ENCODE measurements at regions of chr16 and their contacts with region 1.

Region 1: DNA sequence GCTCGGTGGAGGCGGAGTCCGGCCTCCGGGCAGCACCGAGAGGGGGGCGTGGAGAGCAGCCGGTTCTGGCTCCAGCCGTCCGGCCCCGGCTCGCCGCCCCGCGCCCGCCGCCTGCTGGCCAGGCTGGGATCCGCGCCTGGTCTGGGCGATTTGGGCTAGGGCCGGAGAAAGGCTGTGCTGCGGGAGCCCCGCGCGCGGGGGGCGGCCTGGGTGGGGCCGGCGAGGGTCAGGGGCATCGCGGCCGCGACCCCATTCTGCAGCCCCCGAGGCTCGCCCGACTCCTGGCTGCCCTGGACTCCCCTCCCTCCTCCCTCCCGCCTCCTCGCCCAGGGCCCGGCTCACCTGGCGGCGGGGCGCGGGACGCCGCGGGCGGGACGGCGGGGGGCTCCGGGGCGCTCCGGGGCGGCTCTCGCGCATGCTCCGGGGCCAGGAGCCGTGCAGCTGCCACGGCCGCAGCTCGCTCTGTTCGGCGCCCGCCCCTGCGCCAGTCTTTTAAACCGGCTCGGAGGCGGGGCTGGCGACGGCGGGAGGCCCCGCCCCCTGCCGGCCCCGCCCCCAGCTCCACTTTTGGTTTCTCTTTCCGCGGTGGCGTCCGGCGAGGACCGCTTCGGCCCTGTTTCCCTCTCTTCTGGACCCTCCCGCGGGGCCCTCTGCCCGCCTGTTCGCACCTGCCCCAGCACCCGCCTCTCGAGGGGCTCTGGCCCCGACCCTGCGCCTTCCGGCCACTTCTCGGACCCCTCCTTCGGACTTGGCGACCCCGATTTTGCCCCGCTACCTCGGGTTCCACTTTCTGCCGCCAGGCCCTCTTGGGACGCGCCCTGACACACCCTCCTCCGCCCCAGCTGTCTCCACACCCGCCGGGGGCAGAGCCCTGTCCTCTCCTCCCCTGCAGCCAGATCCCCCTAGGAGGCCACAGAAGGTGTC is at the start of gene SOCS1:
- DNase-seq: peak; percentile 91
- ATAC-seq: peak; percentile 71
- H3K4me3 Mint-ChIP-seq: peak within 1 kb of the TSS; percentile 97
- H3K27ac Mint-ChIP-seq: peak within 1 kb of the TSS; percentile 96
- H3K4me1 Mint-ChIP-seq: peaks cover 54% of the 10 kb centered on the region
- H3K27me3 Mint-ChIP-seq: no peaks in the 10 kb centered on the region
- total RNA-seq, gene SOCS1: 170 to 174 TPM

Region 2: DNA sequence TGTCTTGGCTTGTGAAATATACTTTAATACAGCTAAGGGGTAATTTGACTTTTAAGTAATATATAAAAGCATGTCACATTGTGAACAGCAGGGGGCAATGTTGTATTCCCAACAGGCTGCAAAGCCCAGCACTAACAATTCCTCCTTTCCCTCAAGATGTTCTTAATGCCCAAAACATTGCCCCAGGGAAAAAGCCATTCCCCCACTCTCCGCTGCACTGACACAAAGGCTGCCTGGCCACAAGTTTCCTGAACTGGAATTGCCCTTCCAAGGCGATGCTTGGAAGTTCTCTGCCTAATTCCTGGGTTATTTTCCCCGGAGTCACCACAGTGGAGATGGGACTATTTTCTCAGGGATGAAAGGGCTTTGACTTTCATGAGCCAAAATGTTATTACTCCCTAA is 284.4 kb before region 1 on chr16:
- CTCF ChIA-PET with region 1: interaction called, 210 read pairs
- POLR2A ChIA-PET with region 1: interaction called, 79 read pairs
- DNase-seq: peak; percentile 65
- ATAC-seq: no peak
- H3K4me3 Mint-ChIP-seq: no peak overlapping the region
- H3K27ac Mint-ChIP-seq: no peak overlapping the region
- H3K4me1 Mint-ChIP-seq: peaks cover 80% of the 10 kb centered on the region
- H3K27me3 Mint-ChIP-seq: no peaks in the 10 kb centered on the region

Region 3: GRCh38 chr16:11051879-11052808 is 203.9 kb before region 1 on chr16:
- CTCF ChIA-PET with region 1: interaction called, 17 read pairs
- POLR2A ChIA-PET with region 1: interaction called, 54 read pairs
- DNase-seq: peak; percentile 92
- ATAC-seq: peak; percentile 83
- H3K4me3 Mint-ChIP-seq: peak overlapping the region; percentile 17
- H3K27ac Mint-ChIP-seq: peak overlapping the region; percentile 97
- H3K4me1 Mint-ChIP-seq: peaks cover 98% of the 10 kb centered on the region
- H3K27me3 Mint-ChIP-seq: no peaks in the 10 kb centered on the region

Region 4: GRCh38 chr16:11128265-11129141 is 127.5 kb before region 1 on chr16:
- CTCF ChIA-PET with region 1: interaction called, 10 read pairs
- POLR2A ChIA-PET with region 1: interaction called, 5 read pairs
- DNase-seq: peak; percentile 63
- ATAC-seq: peak; percentile 76
- H3K4me3 Mint-ChIP-seq: peak overlapping the region; percentile 28
- H3K27ac Mint-ChIP-seq: peak overlapping the region; percentile 93
- H3K4me1 Mint-ChIP-seq: peaks cover 81% of the 10 kb centered on the region
- H3K27me3 Mint-ChIP-seq: no peaks in the 10 kb centered on the region

Region 5: DNA sequence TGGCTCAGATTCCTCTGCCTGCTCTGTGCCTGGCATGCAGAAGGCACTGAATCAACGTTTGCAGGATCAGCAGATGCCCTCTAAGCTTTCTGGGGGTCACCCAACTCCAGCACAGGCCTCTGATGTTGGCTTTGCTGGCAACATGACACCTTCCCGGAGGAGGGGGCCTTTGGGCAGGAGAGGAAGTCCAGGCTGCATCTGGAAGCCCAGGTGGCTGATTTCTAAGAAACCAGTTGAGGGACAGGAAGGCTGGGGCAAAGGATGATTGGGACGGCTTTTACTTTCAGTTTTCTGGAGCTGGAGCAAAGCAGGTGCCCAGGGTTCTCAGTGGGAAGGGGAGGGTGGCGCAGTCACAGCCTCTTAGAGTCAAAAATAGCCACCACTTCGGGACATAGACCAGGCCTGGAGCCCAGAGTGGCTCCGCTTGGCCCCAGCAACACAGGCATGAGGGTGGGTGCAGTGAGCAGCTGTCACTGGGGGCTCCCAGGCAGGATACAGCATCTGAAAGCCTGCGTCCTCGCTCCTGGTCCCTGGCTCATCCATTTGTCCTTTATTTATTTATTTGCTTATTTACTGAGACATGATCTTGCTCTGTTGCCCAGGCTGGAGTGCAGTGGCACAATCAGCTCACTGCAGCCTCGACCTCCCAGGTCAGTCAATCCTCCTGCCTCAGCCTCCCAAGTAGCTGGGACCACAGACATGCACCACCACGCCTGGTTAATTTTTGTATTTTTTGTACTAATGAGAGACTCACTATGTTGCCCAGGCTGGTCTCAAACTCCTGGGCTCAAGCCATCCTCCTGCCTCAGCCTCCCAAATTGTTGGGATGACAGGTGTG is 15.1 kb before region 1 on chr16:
- CTCF ChIA-PET with region 1: interaction called, 56 read pairs
- POLR2A ChIA-PET with region 1: interaction called, 122 read pairs
- DNase-seq: peak; percentile 54
- ATAC-seq: peak; percentile 67
- H3K4me3 Mint-ChIP-seq: peak overlapping the region; percentile 64
- H3K27ac Mint-ChIP-seq: no peak overlapping the region
- H3K4me1 Mint-ChIP-seq: peaks cover 23% of the 10 kb centered on the region
- H3K27me3 Mint-ChIP-seq: no peaks in the 10 kb centered on the region

Region 6: GRCh38 chr16:11356573-11357331 is 100.8 kb after region 1 on chr16:
- CTCF ChIA-PET with region 1: interaction called, 99 read pairs
- POLR2A ChIA-PET with region 1: interaction called, 64 read pairs
- DNase-seq: peak; percentile 68
- ATAC-seq: no peak
- H3K4me3 Mint-ChIP-seq: peak overlapping the region; percentile 76
- H3K27ac Mint-ChIP-seq: peak overlapping the region; percentile 65
- H3K4me1 Mint-ChIP-seq: peaks cover 91% of the 10 kb centered on the region
- H3K27me3 Mint-ChIP-seq: peaks cover 5% of the 10 kb centered on the region

Measured in activated CD8-positive, alpha-beta T cell treated with anti-CD3 and anti-CD28 coated beads, Interleukin-2, amount 10 ng/mL, durations not matched to agents 7 days and 5 days (primary cell).